Activated CD4-positive, alpha-beta memory T cell treated with anti-CD3 and anti-CD28 coated beads for 36 hours (primary cell): ENCODE measurements at regions of chr5 and their contacts with region 1.

Region 1: DNA sequence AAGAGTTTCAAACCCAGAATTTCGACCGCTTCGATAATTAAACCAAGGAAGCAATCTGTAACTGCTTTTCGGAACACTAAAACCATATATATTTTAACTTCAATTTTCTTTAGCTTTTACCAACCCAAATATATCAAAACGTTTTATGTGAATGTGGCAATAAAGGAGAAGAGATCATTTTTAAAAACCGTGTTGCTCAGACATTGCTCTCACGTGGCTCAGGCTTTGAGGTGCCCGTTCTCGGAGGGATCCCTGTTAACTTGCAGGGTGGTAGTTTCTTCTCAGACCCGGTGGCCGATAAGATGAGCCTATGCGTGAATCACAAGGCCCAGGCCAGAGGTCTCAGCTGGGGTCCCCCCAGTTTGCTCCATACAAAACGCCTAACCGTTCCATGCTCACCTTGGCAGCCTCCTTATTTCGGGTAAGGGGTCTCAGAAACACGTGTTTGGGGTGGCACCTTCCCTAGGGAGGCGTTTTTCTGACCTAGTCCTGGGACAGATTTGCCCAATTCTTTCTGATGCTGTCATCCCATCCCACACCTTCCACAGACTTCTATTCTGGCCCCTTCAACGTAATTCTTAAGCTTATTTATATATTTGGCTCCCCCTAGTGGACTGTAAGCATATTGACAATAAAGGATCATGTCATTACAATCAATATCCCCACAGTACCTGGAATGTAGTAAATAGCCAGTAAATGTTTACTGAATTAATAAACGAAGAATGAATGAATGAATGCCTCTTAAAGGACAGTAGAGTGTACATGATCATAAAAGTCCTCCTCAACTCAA is 48.1 kb downstream of the THBS4 start:
- DNase-seq: peak; percentile 31
- H3K4me3 Mint-ChIP-seq: peak overlapping the region; percentile 54
- H3K27ac Mint-ChIP-seq: peak overlapping the region; percentile 50
- H3K4me1 Mint-ChIP-seq: peaks cover 11% of the 10 kb centered on the region
- H3K27me3 Mint-ChIP-seq: no peaks in the 10 kb centered on the region

Region 2: DNA sequence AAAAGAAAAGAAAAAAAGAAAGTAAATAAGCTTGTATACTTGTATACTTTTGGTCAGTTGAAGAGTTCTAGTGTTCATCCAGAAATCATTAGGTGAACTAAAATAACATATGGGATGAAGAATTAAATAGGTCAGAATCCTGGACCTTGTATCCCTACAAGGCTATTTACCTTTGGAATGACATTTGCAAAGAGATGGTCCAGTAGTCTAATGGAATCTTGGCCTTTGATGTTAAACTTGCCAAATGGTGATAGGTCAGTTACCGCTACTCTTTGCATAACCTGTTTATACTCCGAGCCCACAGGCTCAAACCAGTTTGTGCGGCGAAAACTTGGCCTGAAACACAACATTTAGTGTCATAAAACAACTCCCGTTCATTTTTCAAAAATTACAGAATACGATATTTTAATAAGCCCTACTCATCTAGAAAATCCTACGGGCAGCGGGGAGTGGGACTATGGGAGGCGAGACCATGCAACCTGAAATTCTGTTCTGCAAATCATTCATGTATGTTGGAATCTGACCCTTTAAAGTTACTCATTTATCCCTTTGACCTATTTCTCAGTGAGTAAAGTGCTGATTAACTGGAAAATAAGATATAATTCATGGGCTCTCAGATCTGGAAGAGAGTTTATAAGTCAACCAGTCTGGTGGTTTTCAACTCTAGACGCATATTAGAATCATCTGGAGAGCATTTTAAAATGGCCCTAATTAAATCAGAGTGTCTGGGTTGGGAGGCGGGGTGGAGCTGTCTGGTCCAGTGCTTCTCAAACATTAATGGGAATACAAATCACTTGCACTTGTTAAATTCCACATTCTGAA is 1052.4 kb before region 1 on chr5:
- CTCF ChIA-PET with region 1: no interaction called
- POLR2A ChIA-PET with region 1: no interaction called
- intact Hi-C with region 1: no loop called
- DNase-seq: no peak
- H3K4me3 Mint-ChIP-seq: no peak overlapping the region
- H3K27ac Mint-ChIP-seq: no peak overlapping the region
- H3K4me1 Mint-ChIP-seq: no peaks in the 10 kb centered on the region
- H3K27me3 Mint-ChIP-seq: peaks cover 4% of the 10 kb centered on the region

Region 3: DNA sequence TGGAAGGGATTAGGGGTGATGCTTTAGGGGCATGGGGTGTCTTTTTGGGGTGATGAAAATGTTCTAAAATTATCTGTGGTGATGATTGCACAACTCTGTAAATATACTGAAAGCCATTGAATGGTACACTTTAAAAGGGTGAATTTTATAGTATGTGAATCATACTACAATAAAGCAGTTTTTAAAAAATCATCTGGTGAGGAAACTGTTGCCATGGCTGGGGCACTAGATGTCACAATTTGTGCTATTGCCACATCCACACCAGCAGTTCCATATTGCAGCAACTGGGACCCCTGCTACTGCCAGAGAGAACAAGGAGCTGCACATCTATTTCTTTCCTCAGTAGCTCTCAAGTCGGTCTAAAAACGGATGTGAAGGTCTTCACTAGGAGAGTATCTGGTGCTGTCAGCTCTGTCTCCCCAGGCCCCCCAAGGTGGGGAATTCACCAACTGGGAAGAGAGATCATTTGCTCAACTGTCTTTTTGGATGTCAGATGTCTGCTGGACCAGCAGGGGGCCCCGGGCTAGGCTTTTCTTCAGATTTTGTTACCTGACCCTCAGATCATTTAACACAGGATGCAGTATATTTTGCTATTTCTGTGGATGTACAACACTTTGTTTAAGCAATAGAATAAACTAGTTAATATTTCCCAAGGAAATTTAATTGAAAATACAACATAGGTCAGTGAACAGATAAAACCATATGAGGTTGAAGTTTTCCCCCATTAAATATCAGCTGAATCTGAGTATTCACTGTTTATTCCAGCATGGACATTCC is 380.5 kb before region 1 on chr5:
- CTCF ChIA-PET with region 1: interaction called, 9 read pairs
- POLR2A ChIA-PET with region 1: no interaction called
- intact Hi-C with region 1: loop called (anchors 2 kb)
- DNase-seq: peak; percentile 48
- H3K4me3 Mint-ChIP-seq: no peak overlapping the region
- H3K27ac Mint-ChIP-seq: no peak overlapping the region
- H3K4me1 Mint-ChIP-seq: peaks cover 13% of the 10 kb centered on the region
- H3K27me3 Mint-ChIP-seq: no peaks in the 10 kb centered on the region

Region 4: DNA sequence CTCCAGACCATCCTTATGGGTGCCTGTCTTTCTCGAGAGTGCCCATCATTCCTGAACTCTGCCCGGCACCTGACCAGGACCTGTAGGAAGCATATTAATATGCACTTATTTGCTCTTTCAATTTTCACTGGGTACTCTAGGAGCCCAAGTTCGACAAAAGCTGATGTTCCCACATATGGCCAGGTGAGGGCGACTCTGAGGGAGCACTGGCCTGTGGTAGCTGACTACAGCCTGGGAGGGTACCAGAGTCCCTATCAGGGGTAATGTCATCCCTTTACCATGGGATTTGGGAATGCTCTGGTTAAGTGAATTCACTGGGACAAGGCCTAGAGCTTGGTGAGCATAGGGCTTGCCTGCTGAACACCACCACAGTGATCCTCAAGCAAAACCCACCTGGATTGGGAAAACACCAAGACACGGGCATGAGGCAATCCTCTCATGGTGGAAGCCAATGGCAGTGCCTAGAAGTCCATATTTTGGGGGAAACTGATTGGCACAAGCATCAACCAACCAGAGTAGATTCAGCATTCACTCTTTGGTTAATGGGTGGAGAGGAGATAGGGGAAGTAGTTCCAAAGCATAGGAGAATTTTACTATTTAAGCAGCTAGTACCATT is 204.5 kb before region 1 on chr5:
- CTCF ChIA-PET with region 1: interaction called, 98 read pairs
- POLR2A ChIA-PET with region 1: no interaction called
- intact Hi-C with region 1: loop called (anchors 1 kb)
- DNase-seq: peak; percentile 67
- H3K4me3 Mint-ChIP-seq: no peak overlapping the region
- H3K27ac Mint-ChIP-seq: no peak overlapping the region
- H3K4me1 Mint-ChIP-seq: no peaks in the 10 kb centered on the region
- H3K27me3 Mint-ChIP-seq: peaks cover 2% of the 10 kb centered on the region

Region 5: DNA sequence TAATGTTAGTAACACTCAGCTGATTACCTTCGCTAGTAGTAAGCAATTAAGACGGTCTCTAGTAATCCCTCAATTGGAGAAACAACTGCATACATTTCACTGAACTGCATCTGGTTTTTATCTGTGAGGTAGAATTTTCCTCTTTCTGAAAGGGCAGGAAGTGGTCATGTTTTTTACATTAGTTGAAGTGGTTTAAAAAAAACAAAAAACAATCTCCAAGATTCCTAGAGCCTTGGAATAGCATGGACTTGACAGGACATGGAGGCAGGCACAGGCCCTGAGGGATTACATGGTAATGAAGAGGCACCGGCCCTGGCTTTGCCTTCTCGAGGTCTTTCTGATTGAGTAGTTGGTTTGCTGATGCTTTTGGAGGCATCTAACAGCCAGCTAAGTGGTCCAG is 22.3 kb before region 1 on chr5:
- CTCF ChIA-PET with region 1: interaction called, 11 read pairs
- POLR2A ChIA-PET with region 1: no interaction called
- intact Hi-C with region 1: no loop called
- DNase-seq: no peak
- H3K4me3 Mint-ChIP-seq: no peak overlapping the region
- H3K27ac Mint-ChIP-seq: no peak overlapping the region
- H3K4me1 Mint-ChIP-seq: peaks cover 11% of the 10 kb centered on the region
- H3K27me3 Mint-ChIP-seq: no peaks in the 10 kb centered on the region

Region 6: DNA sequence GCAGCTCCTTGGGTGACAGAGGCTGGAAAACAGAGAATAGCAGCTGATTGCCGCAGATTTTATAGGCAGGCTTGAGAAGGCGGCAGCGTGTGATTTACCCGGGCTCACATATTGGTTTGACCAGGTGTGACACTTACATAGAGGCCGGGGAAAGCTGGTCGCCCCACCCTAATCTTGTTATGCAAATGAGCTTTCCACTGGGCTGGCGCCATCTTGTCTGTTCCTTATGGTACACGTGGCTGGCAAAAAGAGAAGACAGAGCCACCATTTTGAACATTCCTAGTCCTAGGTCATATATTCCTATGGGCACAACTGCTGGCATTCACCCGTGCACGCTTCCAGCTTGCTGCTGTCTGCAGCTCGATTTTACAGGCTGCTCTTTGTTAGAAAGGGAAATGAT is 225.2 kb after region 1 on chr5:
- CTCF ChIA-PET with region 1: interaction called, 214 read pairs
- POLR2A ChIA-PET with region 1: no interaction called
- intact Hi-C with region 1: no loop called
- DNase-seq: no peak
- H3K4me3 Mint-ChIP-seq: no peak overlapping the region
- H3K27ac Mint-ChIP-seq: no peak overlapping the region
- H3K4me1 Mint-ChIP-seq: no peaks in the 10 kb centered on the region
- H3K27me3 Mint-ChIP-seq: no peaks in the 10 kb centered on the region